HepG2 (cell line): ENCODE measurements at regions of chr11 and their contacts with region 1.

Region 1: GRCh38 chr11:20397281-20397680 is 9.8 kb downstream of the PRMT3 start:
- DNase-seq: peak; percentile 35
- ATAC-seq: peak; percentile 85
- H3K4me3 ChIP-seq: no peak overlapping the region
- H3K27ac ChIP-seq: no peak overlapping the region
- H3K4me1 ChIP-seq: no peaks in the 10 kb centered on the region
- H3K27me3 ChIP-seq: no peaks in the 10 kb centered on the region
- CTCF ChIP-seq: peak; percentile 57
- EP300 ChIP-seq: no peak
- POLR2A ChIP-seq: no peak
- RAD21 ChIP-seq: no peak

Region 2: GRCh38 chr11:20443596-20443995 is 46.3 kb after region 1 on chr11:
- CTCF ChIA-PET with region 1: no interaction called
- POLR2A ChIA-PET with region 1: no interaction called
- in situ Hi-C with region 1: no loop called
- intact Hi-C with region 1: loop called (anchors 2 kb)
- DNase-seq: peak; percentile 5
- ATAC-seq: no peak
- H3K4me3 ChIP-seq: no peak overlapping the region
- H3K27ac ChIP-seq: no peak overlapping the region
- H3K4me1 ChIP-seq: peaks cover 9% of the 10 kb centered on the region; the same call in 1 of the 2 replicates
- H3K27me3 ChIP-seq: no peaks in the 10 kb centered on the region
- CTCF ChIP-seq: 0 out of 2 replicates have a peak, but pooled peaks have one; percentile 14
- EP300 ChIP-seq: no peak
- POLR2A ChIP-seq: no peak
- RAD21 ChIP-seq: no peak

Region 3: DNA sequence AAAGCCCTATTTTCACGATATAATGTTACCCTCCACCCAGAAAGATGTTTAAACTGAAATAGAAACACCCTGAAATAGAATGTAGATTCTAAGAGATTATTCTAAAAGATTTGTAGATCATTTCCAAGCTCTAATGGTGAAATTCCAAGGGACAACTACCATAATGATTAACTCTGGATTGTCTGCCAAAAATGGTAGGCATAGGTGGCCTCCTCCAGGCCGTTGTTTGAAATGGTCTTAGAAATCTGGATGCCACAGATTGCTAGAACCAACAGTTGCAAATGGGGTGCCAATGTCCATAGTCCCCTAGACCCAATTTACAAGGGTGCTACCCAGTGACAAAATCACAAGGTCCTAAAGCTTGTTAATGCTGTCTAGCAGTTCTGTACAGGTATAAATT is 195.5 kb after region 1 on chr11:
- CTCF ChIA-PET with region 1: no interaction called
- POLR2A ChIA-PET with region 1: no interaction called
- in situ Hi-C with region 1: no loop called
- intact Hi-C with region 1: loop called (anchors 5 kb)
- DNase-seq: no peak
- ATAC-seq: no peak
- H3K4me3 ChIP-seq: no peak overlapping the region
- H3K27ac ChIP-seq: no peak overlapping the region
- H3K4me1 ChIP-seq: peaks cover 9% of the 10 kb centered on the region; the same call in 1 of the 2 replicates
- H3K27me3 ChIP-seq: peaks cover 1 to 21% of the 10 kb centered on the region in 2 experiments; a peak in 2 of 5 replicates
- CTCF ChIP-seq: no peak
- EP300 ChIP-seq: no peak
- POLR2A ChIP-seq: no peak
- RAD21 ChIP-seq: no peak